Brain microvascular endothelial cell (primary cell): ENCODE measurements at regions of chr19 and their contacts with region 1.

Region 1: DNA sequence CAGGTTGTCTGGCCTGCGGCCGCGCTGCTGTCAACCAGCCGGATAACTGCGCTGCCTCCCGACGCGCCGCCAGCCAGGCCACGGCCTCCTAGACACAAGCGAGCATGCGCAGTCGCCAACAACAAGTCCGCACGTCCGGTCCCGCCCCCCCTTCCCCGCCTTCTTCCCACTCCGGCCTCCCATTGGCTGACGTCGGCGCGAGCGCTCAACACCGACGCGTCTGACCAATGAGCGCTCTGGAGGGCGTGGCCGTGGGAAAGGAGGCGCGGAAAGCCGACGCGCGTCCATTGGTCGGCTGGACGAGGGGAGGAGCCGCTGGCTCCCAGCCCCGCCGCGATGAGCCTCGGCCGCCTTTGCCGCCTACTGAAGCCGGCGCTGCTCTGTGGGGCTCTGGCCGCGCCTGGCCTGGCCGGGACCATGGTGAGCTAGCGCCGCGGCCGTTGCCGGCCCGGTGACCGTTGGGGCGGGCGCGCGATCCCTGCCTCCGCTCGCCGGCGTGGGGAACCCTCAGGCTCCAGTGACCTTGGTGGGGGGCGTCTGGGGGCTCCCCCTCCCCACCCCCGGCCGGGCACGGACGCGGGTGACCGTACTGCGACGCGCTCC is at the start of gene GPX4:
- DNase-seq: peak; percentile 97
- H3K4me3 ChIP-seq: peak within 1 kb of the TSS; percentile 69
- H3K27ac ChIP-seq: peak within 1 kb of the TSS; percentile 96
- H3K27me3 ChIP-seq: no peaks in the 10 kb centered on the region
- CTCF ChIP-seq: no peak

Region 2: GRCh38 chr19:680287-681028 is 423.4 kb before region 1 on chr19:
- in situ Hi-C with region 1: no loop called
- DNase-seq: peak; percentile 99
- H3K4me3 ChIP-seq: peak overlapping the region; percentile 57
- H3K27ac ChIP-seq: peak overlapping the region; percentile 97
- H3K27me3 ChIP-seq: no peaks in the 10 kb centered on the region
- CTCF ChIP-seq: peak; percentile 17

Region 3: DNA sequence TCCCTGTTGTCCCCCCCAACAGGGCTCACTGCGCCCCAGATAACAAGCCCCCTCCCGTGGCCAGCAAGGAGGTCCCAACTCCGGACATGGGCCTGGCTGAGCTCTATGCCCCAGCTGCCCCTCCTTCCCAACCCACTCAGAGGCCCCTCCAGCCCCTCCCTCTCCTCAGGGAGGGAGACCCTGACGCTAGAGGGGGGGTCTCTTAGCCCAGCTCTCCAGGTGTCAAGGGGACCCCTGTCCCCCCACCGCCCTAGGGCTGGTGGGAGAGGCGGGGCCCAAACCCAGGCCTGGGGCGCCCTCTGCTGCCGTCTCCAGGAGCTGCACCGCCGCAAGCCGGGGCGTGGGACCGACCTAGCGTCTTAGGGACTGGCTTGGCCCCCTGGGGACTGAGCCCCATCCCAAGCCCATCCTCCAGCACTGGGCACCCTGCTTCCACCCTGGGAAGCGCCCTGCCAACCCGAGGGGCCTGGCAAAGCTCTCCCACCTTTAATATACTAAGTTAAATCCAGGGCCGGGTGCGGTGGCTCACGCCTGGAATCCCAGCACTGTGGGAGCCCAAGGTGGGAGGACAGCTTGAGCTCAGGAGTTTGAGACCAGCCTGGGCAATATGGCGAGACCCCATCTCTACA is 102.2 kb before region 1 on chr19:
- in situ Hi-C with region 1: no loop called
- DNase-seq: no peak
- H3K4me3 ChIP-seq: no peak overlapping the region
- H3K27ac ChIP-seq: no peak overlapping the region
- H3K27me3 ChIP-seq: peaks cover 40% of the 10 kb centered on the region
- CTCF ChIP-seq: peak; percentile 94

Region 4: GRCh38 chr19:1045247-1045603 is 58.6 kb before region 1 on chr19:
- in situ Hi-C with region 1: no loop called
- DNase-seq: no peak
- H3K4me3 ChIP-seq: no peak overlapping the region
- H3K27ac ChIP-seq: no peak overlapping the region
- H3K27me3 ChIP-seq: no peaks in the 10 kb centered on the region
- CTCF ChIP-seq: no peak

Region 5: GRCh38 chr19:1064661-1065605 is 38.9 kb before region 1 on chr19:
- in situ Hi-C with region 1: no loop called
- DNase-seq: no peak
- H3K4me3 ChIP-seq: no peak overlapping the region
- H3K27ac ChIP-seq: no peak overlapping the region
- H3K27me3 ChIP-seq: no peaks in the 10 kb centered on the region
- CTCF ChIP-seq: peak; percentile 68

Region 6: DNA sequence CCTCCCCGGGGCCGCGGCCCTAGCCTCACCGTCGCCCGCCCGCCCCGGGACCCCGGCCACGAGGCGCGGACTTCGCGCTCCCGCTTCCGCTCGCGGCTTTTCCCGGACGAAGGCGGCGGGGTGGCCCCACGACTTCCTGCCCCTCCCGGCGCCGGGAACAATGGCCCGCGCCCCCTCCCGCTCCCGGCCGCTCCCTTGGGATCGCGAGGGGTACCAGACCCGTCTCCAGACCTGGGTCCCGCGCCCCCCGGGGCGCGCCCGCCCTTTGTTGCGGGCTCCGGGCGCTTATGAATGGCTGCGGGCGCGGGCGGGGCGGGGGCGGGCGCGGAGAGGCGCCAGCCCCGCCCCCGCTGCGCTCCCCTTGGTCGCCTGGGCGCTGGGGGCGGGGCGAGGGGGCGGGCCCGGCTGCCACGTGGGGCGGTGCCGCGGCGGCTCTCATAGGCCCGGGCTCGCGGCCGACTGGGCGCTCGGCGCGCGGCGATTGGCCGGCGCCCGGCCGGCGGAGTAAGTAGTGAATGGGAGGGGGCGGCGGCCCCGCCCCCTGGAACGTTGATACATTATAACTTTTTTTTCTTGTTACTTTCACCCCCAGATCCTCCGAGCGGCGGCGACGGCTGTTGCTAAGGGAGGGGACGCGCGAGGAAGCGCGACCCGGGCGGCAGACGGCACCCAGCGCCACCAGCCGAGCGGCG is 145.6 kb after region 1 on chr19:
- in situ Hi-C with region 1: loop called (anchors 25 kb)
- DNase-seq: peak; percentile 92
- H3K4me3 ChIP-seq: peak overlapping the region; percentile 79
- H3K27ac ChIP-seq: peak overlapping the region; percentile 94
- H3K27me3 ChIP-seq: no peaks in the 10 kb centered on the region
- CTCF ChIP-seq: no peak